ENCODE measurements at regions of chr1 and their contacts with region 1.

Region 1: GRCh38 chr1:23634842-23635651 is 56.6 kb upstream of the RPL11 start:
- DNase-seq: peak; percentile 36 to 74 (median 49)
- H3K4me3 ChIP-seq: peak overlapping the region; percentile 48
- H3K27ac ChIP-seq: peak overlapping the region; percentile 9 to 49
- H3K4me1 ChIP-seq: peaks cover 6% of the 10 kb centered on the region
- H3K27me3 ChIP-seq: no peaks in the 10 kb centered on the region
- CTCF ChIP-seq: peak; percentile 80 to 86 (median 84)
- EP300 ChIP-seq: no peak
- POLR2A ChIP-seq: no peak

Region 2: DNA sequence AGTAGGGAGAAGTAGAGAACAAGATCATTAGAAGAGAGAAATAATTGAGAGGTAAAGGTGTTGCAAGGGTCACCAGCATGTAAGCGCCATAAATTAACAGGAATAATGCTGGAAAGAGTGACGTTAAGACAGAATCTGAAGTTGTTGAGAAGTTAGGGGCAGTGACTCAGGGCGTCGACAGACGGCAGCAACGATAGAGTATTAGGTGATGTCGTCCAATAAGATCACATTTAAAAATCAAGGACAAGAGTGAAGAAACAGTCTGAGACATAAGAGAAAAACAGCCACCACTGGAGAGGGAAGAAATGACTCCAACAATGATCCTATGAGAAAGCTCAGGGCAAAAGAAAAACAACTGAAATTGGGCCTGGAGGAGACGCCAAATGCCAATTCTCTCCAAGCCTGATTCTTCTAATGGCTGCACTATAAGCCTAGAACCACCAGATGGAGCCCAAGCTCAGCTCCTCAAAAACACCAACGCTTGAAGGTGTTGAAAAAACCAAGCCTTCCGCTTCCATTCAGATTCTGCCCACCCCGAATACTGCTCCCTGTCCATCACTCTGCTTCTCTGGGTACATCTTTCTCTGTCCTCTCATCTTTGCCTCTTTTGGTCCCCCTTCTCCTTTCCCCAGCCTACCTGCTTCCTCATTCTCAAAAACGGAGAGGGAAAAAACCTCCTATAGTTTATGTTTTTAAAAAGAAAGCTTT is 536.4 kb before region 1 on chr1:
- intact Hi-C with region 1: loop called in 1 of 4 experiments (anchors 10 kb)
- DNase-seq: peak; percentile 43 to 76 (median 59)
- H3K4me3 ChIP-seq: no peak overlapping the region
- H3K27ac ChIP-seq: no peak overlapping the region
- H3K4me1 ChIP-seq: peaks cover 11% of the 10 kb centered on the region
- H3K27me3 ChIP-seq: no peaks in the 10 kb centered on the region
- CTCF ChIP-seq: peak; percentile 87 to 95 (median 93)
- EP300 ChIP-seq: no peak
- POLR2A ChIP-seq: no peak

Region 3: DNA sequence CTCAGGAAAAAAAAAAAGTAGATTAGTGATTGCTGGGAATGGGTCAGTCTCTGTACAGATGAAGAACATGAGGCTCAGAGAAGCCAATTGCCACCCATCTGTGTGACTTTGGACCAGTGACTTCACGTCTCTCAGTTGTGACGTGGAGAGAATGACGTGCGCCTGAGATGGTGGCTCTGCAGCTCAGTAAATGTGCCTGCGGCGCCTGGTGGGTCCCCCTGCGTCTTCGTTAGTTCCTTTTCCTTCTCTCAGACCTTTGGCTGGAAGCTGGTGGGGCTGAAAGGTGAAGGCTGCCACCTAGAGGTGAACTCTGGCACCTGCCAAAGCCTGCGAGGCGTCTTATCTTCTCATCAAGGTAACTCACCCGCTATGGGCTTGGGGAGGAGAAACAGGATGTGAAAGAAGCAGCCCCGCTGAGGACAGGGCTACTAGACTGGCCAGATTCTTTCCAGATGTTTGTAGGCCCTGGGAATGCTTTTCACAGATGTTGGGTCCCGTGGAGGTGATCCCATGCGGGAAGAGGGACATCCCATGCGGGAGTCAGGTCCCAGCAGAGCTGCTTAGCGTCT is 95.3 kb before region 1 on chr1:
- intact Hi-C with region 1: loop called in 3 of 4 experiments (anchors 1 to 2 kb)
- DNase-seq: peak; percentile 77 to 88 (median 86)
- H3K4me3 ChIP-seq: no peak overlapping the region
- H3K27ac ChIP-seq: no peak overlapping the region
- H3K4me1 ChIP-seq: no peaks in the 10 kb centered on the region
- H3K27me3 ChIP-seq: no peaks in the 10 kb centered on the region
- CTCF ChIP-seq: peak; percentile 79 to 89 (median 82)
- EP300 ChIP-seq: no peak
- POLR2A ChIP-seq: no peak

Region 4: GRCh38 chr1:23546897-23547584 is 88.0 kb before region 1 on chr1:
- intact Hi-C with region 1: loop called (anchors 1 to 2 kb)
- DNase-seq: no peak
- H3K4me3 ChIP-seq: no peak overlapping the region
- H3K27ac ChIP-seq: no peak overlapping the region
- H3K4me1 ChIP-seq: peaks cover 3% of the 10 kb centered on the region
- H3K27me3 ChIP-seq: no peaks in the 10 kb centered on the region
- CTCF ChIP-seq: no peak
- EP300 ChIP-seq: no peak
- POLR2A ChIP-seq: no peak

Region 5: GRCh38 chr1:23657659-23658275 is 22.7 kb after region 1 on chr1:
- intact Hi-C with region 1: no loop called
- DNase-seq: peak; percentile 28 to 68 (median 45)
- H3K4me3 ChIP-seq: no peak overlapping the region
- H3K27ac ChIP-seq: no peak overlapping the region
- H3K4me1 ChIP-seq: peaks cover 4% of the 10 kb centered on the region
- H3K27me3 ChIP-seq: no peaks in the 10 kb centered on the region
- CTCF ChIP-seq: peak in 2 of 3 donors; percentile 18 to 37
- EP300 ChIP-seq: no peak
- POLR2A ChIP-seq: no peak

Region 6: DNA sequence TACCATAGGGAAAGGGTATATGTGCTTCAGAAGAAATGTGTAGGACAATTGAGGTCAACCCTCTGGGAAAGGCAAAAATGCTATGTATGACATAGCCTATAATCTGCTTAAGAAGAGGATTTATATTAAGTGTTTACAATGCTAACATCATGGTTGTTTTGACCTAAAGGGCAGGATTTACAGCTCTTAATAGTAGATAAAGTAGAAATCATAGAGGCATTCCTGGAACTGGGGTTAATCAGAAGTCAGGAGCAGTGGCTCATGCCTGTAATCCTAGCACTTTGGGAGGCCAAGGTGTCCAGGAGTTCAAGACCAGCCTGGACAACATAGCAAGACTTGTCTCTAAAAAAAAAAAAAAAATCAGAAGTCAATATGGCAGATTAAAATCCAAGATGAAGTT is 47.9 kb after region 1 on chr1:
- intact Hi-C with region 1: no loop called
- DNase-seq: no peak
- H3K4me3 ChIP-seq: no peak overlapping the region
- H3K27ac ChIP-seq: no peak overlapping the region
- H3K4me1 ChIP-seq: no peaks in the 10 kb centered on the region
- H3K27me3 ChIP-seq: no peaks in the 10 kb centered on the region
- CTCF ChIP-seq: no peak
- EP300 ChIP-seq: no peak
- POLR2A ChIP-seq: no peak

Measured in ovary (tissue), 10 donors.